ENCODE measurements at regions of chr17 and their contacts with region 1.

Region 1: GRCh38 chr17:17972126-17972951 is at the starts of genes DRC3 and TOM1L2:
- DNase-seq: peak; percentile 100
- ATAC-seq: peak; percentile 94
- H3K4me3 Mint-ChIP-seq: peak within 1 kb of the TSS; percentile 86
- H3K27ac Mint-ChIP-seq: peak within 1 kb of the TSS; percentile 87
- H3K4me1 Mint-ChIP-seq: peaks cover 43% of the 10 kb centered on the region
- H3K27me3 Mint-ChIP-seq: no peaks in the 10 kb centered on the region
- total RNA-seq, gene DRC3: not detected
- total RNA-seq, gene TOM1L2: 19.8 to 33.0 TPM

Region 2: DNA sequence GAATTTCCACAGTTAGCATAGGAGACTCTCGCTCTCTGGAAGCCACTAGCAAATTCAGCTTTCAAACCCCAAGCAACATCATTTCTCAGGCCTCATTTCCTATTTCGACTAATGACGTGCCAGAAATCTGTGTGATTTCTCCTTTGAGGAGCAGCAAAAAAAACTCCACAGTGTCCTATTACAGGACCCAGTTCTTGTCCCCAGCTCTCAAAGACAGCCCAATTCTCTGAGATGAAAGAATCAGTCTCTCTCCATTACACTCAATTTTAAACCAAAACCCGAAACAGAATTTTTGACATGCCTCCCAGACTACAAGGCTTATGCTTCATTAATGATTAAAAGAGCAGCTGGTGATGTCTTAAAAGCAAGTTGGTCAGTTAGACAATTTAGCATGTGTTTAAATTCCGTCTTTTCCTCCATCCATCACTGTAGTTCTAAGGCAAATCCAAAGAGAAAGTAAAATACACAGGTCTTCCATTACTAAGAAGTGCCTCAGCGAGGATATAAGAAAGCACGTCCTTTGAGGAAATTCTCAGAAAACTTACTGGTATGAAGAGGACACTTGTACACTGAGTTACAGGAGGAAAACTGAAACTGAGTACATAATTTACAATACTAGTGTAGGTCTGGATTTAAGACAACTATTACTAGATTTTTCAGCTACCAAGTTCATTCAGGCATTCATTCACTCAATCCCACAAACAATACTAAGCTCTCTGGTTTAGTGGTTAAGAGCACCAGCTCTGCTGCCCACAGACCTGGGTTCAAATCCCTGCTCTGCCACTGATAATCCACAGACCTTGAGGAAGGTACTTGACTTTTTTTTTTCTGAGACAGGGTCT is 12.6 kb before region 1 on chr17:
- CTCF ChIA-PET with region 1: interaction called, 17 read pairs
- DNase-seq: peak; percentile 57
- ATAC-seq: peak; percentile 64
- H3K4me3 Mint-ChIP-seq: peak overlapping the region; percentile 74
- H3K27ac Mint-ChIP-seq: peak overlapping the region; percentile 98
- H3K4me1 Mint-ChIP-seq: peaks cover 66% of the 10 kb centered on the region
- H3K27me3 Mint-ChIP-seq: no peaks in the 10 kb centered on the region

Measured in activated CD8-positive, alpha-beta memory T cell treated with anti-CD3 and anti-CD28 coated beads, Interleukin-2, amount 10 ng/mL, durations not matched to agents 7 days and 5 days (primary cell).